Gastrocnemius medialis (tissue), 4 donors: ENCODE measurements at regions of chr4 and their contacts with region 1.

Region 1: GRCh38 chr4:173505924-173506518 is 24.0 kb downstream of the HAND2 start:
- DNase-seq: no peak
- ATAC-seq: peak; percentile 38 to 54
- H3K4me3 ChIP-seq: no peak overlapping the region
- H3K27ac ChIP-seq: no peak overlapping the region
- H3K4me1 ChIP-seq: no peaks in the 10 kb centered on the region
- H3K27me3 ChIP-seq: peaks cover 69 to 74% (median 70%) of the 10 kb centered on the region in 3 donors
- CTCF ChIP-seq: peak in 4 of 5 experiments; percentile 38 to 57 (median 42)
- POLR2A ChIP-seq: no peak

Region 2: GRCh38 chr4:173181769-173182354 is 324.2 kb before region 1 on chr4:
- in situ Hi-C with region 1: no loop called
- intact Hi-C with region 1: no loop called
- DNase-seq: no peak
- ATAC-seq: no peak
- H3K4me3 ChIP-seq: no peak overlapping the region
- H3K27ac ChIP-seq: no peak overlapping the region
- H3K4me1 ChIP-seq: peaks cover 0 to 6% of the 10 kb centered on the region in 2 donors
- H3K27me3 ChIP-seq: no peaks in the 10 kb centered on the region
- CTCF ChIP-seq: no peak
- POLR2A ChIP-seq: no peak

Region 3: DNA sequence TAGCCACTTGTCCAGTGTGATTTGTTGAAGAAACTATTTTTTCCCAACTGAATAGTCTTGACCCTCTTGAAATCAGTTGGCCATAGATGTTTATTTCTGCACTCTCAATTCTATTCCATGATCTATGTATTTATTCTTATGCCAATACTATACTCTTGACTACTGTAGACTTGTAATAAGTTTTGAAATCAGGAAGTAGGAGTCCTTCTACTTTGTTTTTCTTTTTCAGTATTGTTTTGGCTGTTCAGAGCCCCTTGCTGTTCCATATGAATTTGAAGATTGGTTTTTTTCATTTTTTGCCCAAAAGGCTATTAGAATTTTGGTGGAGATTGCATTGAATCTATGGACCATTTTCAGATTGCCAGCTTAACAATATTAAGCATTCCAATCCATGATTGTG is 125.0 kb before region 1 on chr4:
- in situ Hi-C with region 1: no loop called
- intact Hi-C with region 1: no loop called
- DNase-seq: no peak
- ATAC-seq: no peak
- H3K4me3 ChIP-seq: no peak overlapping the region
- H3K27ac ChIP-seq: no peak overlapping the region
- H3K4me1 ChIP-seq: no peaks in the 10 kb centered on the region
- H3K27me3 ChIP-seq: no peaks in the 10 kb centered on the region
- CTCF ChIP-seq: no peak
- POLR2A ChIP-seq: no peak

Region 4: DNA sequence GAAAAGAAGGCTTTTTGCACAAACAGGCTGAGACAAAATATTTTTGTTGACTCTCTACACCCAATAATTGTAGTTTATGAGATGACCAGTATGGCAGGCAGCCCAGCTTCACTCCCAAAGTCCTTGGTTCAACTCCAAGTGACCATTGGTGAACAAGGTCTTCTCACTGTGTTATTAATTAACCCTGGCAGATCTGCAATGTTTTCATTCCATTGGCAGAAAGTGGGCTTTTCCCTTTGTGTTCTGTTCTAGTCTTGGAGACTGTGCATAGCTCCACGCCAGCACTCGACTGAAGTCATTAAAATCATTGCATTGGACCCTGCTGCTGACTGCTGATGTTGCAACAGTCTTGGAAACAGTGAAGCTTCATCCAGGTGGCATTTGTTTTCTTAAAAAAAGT is 301.3 kb after region 1 on chr4:
- in situ Hi-C with region 1: loop called in 1 of 4 experiments (anchors 25 kb)
- intact Hi-C with region 1: no loop called
- DNase-seq: peak; percentile 33 to 37
- ATAC-seq: peak; percentile 53 to 77
- H3K4me3 ChIP-seq: no peak overlapping the region
- H3K27ac ChIP-seq: no peak overlapping the region
- H3K4me1 ChIP-seq: no peaks in the 10 kb centered on the region
- H3K27me3 ChIP-seq: no peaks in the 10 kb centered on the region
- CTCF ChIP-seq: no peak
- POLR2A ChIP-seq: no peak

Region 5: DNA sequence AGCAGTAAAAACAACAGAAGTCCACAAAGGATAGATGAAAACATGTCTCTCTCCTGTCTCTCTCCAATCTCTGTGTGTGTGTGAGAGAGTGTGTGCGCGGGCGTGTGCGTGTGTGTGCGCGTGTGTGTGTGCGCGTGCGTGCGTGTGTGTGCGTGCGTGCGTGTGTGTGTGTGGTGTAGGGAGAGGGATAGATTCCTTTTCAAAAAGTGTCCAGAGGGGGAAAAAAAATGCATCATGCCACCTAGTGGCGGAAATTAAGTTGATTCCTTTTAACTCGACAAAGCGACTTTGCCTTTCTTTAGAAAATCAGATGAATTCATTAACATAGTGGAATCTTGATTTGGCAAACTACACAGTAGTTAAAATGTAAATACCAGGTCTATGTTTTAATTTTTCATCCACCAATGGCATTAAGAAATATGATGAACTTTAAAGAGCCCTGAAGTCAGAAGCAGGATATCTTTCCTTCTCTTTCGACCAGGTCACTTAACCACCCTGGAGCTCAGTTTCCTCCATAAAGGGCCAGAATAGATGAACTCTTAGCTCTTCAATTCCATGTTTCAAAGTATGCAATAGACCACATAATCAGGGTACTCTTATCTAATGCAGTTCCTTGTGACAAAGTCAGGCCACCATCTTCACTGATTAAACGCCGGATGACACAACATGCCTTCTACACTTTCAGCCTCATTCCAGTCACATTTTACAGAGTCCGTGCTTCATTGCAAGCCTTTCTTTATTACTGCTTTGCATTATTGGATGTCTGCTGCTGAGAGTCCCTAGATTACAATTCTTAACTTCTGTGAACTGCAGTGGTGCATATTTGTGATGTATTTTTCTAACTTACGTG is 614.6 kb after region 1 on chr4:
- in situ Hi-C with region 1: loop called in 1 of 4 experiments (anchors 25 kb)
- intact Hi-C with region 1: loop called (anchors 2 kb)
- DNase-seq: no peak
- ATAC-seq: peak in 1 of 2 donors; percentile 55
- H3K4me3 ChIP-seq: peak overlapping the region in 3 of 4 donors; percentile 14 to 34 (median 26)
- H3K27ac ChIP-seq: no peak overlapping the region
- H3K4me1 ChIP-seq: peaks cover 0 to 3% of the 10 kb centered on the region in 2 donors
- H3K27me3 ChIP-seq: peaks cover 11 to 14% (median 11%) of the 10 kb centered on the region in 3 donors
- CTCF ChIP-seq: peak in 3 of 5 experiments; percentile 23 to 43 (median 39)
- POLR2A ChIP-seq: no peak

Region 6: DNA sequence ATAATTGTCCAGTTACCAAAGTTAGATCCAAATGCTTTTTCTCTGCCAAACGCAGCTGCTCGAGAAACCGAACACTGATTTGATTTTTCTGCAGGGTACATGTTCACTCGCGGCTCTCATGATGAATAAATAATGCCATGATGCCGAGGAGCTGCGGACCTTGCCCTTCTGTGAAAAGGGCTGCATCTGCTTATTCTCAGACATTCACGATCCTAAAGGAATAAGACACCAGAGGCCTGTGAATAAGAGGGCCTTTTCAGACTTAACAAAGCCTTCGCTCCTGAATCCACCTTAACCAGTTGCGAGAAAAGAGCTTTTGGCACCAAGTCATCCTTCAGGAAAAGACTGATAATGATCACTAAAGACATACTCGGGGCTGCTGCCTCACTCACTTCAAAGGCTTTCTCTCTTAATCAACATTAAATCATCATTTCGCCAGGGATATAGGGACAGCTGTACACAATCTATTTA is 630.0 kb after region 1 on chr4:
- in situ Hi-C with region 1: loop called in 1 of 4 experiments (anchors 25 kb)
- intact Hi-C with region 1: no loop called
- DNase-seq: no peak
- ATAC-seq: no peak
- H3K4me3 ChIP-seq: peak overlapping the region; percentile 2 to 28 (median 20)
- H3K27ac ChIP-seq: no peak overlapping the region
- H3K4me1 ChIP-seq: peaks cover 0 to 6% of the 10 kb centered on the region in 2 donors
- H3K27me3 ChIP-seq: no peaks in the 10 kb centered on the region
- CTCF ChIP-seq: no peak
- POLR2A ChIP-seq: no peak

Region 7: DNA sequence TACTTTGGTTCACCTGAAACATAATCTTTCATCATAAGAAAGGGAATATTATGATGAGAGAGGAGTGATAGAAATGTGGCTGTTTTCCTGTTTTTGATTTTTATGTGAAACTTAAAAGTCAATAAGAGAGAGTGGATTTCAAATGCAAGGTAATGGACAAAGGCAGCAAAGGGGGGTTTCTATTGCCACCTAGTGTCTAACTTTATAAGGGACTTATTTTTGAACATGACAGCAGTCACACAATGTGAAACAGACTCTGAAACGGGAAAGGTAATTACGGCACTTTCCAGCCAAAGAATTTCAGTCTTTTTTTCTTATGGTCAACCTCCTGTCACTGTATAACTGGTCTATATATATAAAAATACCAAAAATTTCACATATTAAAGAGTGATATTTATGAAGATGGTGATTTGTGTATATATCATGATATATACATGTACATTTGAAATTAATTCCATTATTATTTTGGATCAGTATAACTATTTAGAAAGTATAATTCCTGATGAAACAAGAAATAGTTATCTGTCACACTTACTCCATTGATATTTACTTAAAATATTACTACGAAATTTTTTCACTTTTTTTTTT is 650.3 kb after region 1 on chr4:
- in situ Hi-C with region 1: no loop called
- intact Hi-C with region 1: loop called (anchors 5 kb)
- DNase-seq: no peak
- ATAC-seq: peak; percentile 66 to 80
- H3K4me3 ChIP-seq: no peak overlapping the region
- H3K27ac ChIP-seq: no peak overlapping the region
- H3K4me1 ChIP-seq: peaks cover 0 to 4% of the 10 kb centered on the region in 2 donors
- H3K27me3 ChIP-seq: peaks cover 0 to 4% (median 0%) of the 10 kb centered on the region in 3 donors
- CTCF ChIP-seq: peak in 3 of 5 experiments; percentile 32 to 61 (median 48)
- POLR2A ChIP-seq: no peak